HAP-1 (cell line): ENCODE measurements at regions of chrX and their contacts with region 1.

Region 1: GRCh38 chrX:67893931-67894330 is 350.1 kb downstream of the AR start:
- DNase-seq: no peak
- H3K4me3 ChIP-seq: no peak overlapping the region
- H3K4me1 ChIP-seq: no peaks in the 10 kb centered on the region
- H3K27me3 ChIP-seq: no peaks in the 10 kb centered on the region

Region 2: GRCh38 chrX:67780694-67781109 is 113.2 kb before region 1 on chrX:
- in situ Hi-C with region 1: loop called (anchors 25 kb)
- DNase-seq: peak in 1 of 2 experiments; percentile 21
- H3K4me3 ChIP-seq: no peak overlapping the region
- H3K4me1 ChIP-seq: no peaks in the 10 kb centered on the region
- H3K27me3 ChIP-seq: no peaks in the 10 kb centered on the region

Region 3: GRCh38 chrX:67998540-67998939 is 104.6 kb after region 1 on chrX:
- in situ Hi-C with region 1: no loop called
- DNase-seq: no peak
- H3K4me3 ChIP-seq: no peak overlapping the region
- H3K4me1 ChIP-seq: no peaks in the 10 kb centered on the region
- H3K27me3 ChIP-seq: no peaks in the 10 kb centered on the region

Region 4: DNA sequence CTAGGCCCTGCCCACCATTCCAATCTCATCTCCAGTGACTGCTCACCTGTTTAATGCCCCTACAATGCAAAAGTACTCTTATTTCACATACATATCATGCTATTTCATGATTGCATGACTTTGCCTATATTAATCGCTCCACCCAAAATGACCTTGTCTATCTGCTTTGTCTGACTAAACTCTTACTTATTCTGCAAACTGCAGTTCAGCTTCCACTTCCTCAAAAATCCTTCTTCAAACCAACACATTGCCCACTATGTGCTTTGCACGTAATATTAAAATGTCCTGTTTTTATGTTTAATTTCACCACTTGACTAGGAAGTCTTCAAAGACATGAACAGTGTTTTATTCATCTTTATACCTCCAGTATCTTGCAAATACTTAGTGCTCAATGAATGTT is 309.7 kb after region 1 on chrX:
- in situ Hi-C with region 1: no loop called
- DNase-seq: no peak
- H3K4me3 ChIP-seq: no peak overlapping the region
- H3K4me1 ChIP-seq: no peaks in the 10 kb centered on the region
- H3K27me3 ChIP-seq: no peaks in the 10 kb centered on the region